AG04449 (cell line): ENCODE measurements at regions of chr1 and their contacts with region 1.

Region 1: GRCh38 chr1:248837794-248838356 is at the start of gene ZNF672:
- DNase-seq: peak; percentile 86
- H3K4me3 ChIP-seq: peak within 1 kb of the TSS; percentile 93
- CTCF ChIP-seq: no peak

Region 2: DNA sequence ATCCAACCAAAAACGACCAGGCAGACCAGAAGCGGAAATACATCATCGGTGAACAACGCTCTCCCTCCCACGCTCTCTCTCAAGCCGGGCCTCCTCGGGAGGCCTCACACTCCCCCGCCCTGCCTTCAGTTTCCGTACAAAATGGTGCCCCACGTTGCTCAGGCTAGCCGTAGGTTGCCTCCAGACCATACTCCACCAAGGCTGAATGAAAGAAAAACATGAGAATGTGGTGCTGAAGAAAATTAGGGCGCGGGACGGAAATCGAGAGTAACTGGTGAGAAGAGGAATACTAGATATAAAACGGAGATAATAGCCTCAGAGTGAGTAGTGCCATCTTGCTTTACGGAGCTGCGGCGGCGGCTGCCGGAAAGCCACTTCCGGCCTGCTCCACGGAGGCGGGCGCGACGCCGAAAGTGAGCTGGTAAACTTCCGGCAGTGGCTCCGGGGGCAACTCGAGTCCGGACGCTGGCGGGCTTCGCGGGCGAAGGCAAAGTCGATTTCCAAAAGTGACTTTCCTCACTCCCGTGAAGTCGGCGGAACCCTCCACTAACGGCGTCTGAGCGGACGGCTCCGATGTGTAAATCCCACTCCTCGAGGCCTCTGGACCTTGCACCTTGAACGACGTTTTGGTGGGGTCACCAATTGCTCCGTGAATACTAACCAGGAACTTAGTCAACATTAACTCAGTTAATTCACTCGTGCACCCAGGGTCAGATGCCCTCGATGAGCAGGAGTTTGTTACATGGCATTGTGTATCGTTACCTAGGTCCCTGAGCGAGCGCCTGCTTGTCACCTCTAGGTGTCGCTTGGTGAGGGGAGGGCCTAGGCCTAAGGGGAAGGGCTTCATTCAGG is 11.7 kb before region 1 on chr1 and contains the start of gene SH3BP5L:
- CTCF ChIA-PET with region 1: interaction called, 56 read pairs
- POLR2A ChIA-PET with region 1: interaction called, 23 read pairs
- DNase-seq: peak; percentile 77
- H3K4me3 ChIP-seq: peak within 1 kb of the TSS; percentile 71
- CTCF ChIP-seq: peak; percentile 71

Region 3: DNA sequence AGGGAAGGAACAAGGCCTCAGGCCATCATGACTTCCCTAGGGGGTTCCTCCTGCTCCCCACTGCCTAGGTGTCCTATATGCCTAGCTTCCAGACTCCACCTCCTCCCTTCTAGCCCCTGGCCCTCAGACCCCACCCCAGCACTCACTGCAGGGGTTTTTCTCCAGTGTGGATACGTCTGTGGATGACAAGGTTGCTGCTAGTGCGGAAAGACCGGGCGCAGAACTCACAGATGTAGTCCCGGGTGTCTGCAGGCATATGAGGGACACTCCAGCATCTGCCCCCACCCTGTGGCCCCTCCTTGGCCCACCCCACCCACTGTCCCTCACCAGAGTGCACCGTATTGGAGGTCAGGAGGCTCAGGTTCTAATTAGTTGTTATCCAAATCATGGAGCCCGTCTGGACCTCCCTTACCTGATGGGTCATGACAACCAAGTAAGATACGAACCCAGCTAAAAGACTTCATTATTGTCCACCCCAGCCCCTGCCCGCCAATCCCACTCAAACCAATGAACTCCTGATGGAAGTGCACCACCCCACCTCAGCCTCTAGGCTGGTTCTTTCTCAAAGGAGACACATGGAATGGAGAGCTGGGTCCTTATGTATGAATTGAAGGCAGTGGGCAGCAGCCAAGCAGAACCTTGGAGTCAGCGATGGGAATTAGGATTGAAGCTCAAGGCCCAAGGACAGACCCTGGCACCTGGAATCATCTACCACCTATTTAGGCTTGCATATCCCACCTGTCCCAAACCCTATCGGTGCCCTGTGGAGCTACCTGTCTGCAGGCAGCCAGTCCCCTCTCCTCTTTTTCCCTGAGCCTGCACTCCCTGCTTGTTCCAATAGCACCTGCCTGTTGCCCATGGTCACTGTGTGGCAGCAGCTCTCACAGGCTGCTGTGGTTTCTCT is 12.9 kb after region 1 on chr1:
- CTCF ChIA-PET with region 1: interaction called, 13 read pairs
- POLR2A ChIA-PET with region 1: interaction called, 4 read pairs
- DNase-seq: no peak
- H3K4me3 ChIP-seq: no peak overlapping the region
- CTCF ChIP-seq: no peak

Region 4: GRCh38 chr1:248858891-248859889 is 21.3 kb after region 1 on chr1 and contains the start of gene ZNF692:
- CTCF ChIA-PET with region 1: interaction called, 21 read pairs
- POLR2A ChIA-PET with region 1: interaction called, 27 read pairs
- DNase-seq: peak; percentile 77
- H3K4me3 ChIP-seq: peak within 1 kb of the TSS; percentile 81
- CTCF ChIP-seq: no peak